ENCODE measurements at regions of chr17 and their contacts with region 1.

Region 1: DNA sequence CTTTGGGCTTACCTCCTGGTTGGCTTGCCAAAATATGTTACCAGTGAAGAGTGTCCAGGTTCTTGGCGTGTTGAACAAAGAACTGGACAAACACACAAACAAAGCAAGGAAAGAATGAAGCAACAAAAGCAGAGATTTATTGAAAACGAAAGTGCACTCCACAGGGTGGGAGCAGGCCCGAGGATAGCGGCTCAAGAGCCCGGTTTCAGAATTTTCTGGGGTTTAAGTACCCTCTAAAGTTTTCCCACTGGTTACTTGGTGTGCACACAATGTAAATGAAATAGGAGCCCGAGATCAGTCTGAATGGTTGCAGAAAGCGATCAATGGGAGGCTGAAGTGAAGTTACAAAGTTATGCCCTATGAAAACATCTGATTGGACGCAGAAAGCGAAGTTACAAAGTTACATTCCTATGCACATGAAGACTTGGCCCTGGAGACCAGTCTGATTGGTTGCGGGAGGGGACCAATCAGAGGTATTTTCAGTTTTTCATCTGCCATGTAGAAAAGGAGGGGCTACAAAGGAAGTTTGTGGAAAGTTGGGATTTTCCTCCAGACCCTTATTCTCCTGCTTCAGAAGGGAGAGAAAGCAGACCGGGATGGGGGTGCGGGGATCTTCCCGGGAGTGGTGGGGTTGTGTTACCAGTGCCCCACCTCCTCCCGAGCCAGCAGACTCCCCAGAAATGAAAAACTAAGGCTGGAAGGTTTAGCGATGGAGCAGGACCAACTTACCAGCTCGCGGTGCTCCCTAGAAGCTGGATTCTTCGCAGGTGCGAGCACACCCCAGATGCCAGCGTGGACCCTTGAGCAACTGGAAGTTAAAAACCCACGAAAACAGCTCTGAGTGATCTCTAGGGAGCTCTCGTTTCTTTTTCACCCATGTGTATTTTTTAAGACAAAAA is at the start of gene SLFN12:
- DNase-seq: peak; percentile 98
- ATAC-seq: peak; percentile 78
- H3K4me3 ChIP-seq: peak within 1 kb of the TSS; percentile 59
- H3K27ac ChIP-seq: peak within 1 kb of the TSS; percentile 92
- H3K4me1 ChIP-seq: peaks cover 1% of the 10 kb centered on the region; the same call in 1 of the 2 replicates
- H3K27me3 ChIP-seq: no peaks in the 10 kb centered on the region
- CTCF ChIP-seq: no peak
- POLR2A ChIP-seq: peak; percentile 83; the same call in 1 of the 2 replicates
- RAD21 ChIP-seq: no peak
- total RNA-seq, gene SLFN12: 38.9 and 48.6 TPM in 2 replicates

Region 2: GRCh38 chr17:35242805-35243560 is 189.4 kb before region 1 on chr17 and contains the start of gene SLFN5:
- CTCF ChIA-PET with region 1: no interaction called
- POLR2A ChIA-PET with region 1: no interaction called
- dilution Hi-C with region 1: no loop called
- in situ Hi-C with region 1: no loop called
- intact Hi-C with region 1: loop called (anchors 1 kb)
- DNase-seq: peak; percentile 90
- ATAC-seq: peak; percentile 79
- H3K4me3 ChIP-seq: peak within 1 kb of the TSS; percentile 59
- H3K27ac ChIP-seq: peak within 1 kb of the TSS; percentile 85
- H3K4me1 ChIP-seq: peaks cover 5% of the 10 kb centered on the region
- H3K27me3 ChIP-seq: no peaks in the 10 kb centered on the region
- CTCF ChIP-seq: no peak
- POLR2A ChIP-seq: peak; percentile 99
- RAD21 ChIP-seq: 0 out of 2 replicates have a peak, but pooled peaks have one; percentile 5
- total RNA-seq, gene SLFN5: 48.9 and 64.2 TPM in 2 replicates

Region 3: DNA sequence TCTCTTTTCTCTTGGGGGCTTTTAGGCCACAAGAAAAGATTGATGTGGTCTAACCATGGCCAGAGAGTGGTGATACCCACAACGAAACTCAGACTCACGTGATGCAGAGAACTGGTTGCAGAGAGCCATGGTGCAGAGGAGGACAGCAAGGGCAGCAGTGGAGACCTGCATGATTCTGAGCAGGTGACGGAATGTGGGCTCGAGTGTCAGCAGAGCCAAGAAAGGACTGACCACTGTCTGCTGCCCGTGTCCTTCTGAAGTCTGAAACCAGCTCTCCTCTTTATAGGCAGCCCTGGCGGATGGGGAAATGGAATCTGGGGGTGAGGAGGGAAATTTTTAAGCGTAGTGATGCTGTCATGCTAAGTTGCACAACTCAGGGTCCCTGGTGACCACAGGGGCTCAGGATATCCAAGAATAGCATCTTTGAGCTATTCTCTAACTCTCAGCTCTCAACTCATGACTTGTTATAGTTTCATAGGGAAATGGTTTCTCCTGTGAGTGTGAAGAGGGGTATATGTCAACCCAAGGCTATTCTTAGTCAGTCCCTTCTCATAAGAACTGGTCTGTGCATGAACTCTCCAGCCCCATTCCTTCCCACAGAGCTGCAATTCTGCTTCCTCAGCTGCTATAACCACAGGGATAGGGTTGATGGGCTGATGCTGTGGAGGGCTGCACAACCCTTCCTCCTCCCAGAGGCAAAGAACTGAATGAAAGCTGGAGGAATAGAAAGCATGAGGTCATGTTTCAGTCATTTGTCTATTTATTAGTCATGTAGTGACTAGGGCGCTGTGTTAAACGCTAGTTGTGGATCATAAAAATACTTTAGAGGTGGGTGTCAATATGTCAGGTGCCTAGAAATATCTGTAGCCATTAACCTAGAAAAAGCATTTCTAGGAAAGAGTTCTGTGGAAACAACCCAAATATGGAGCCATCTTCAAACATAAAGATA is 657.7 kb after region 1 on chr17 and contains the start of gene CCL3:
- CTCF ChIA-PET with region 1: no interaction called
- POLR2A ChIA-PET with region 1: no interaction called
- dilution Hi-C with region 1: no loop called
- in situ Hi-C with region 1: no loop called
- intact Hi-C with region 1: no loop called
- DNase-seq: no peak
- ATAC-seq: no peak
- H3K4me3 ChIP-seq: no peak within 1 kb of the TSS
- H3K27ac ChIP-seq: no peak within 1 kb of the TSS
- H3K4me1 ChIP-seq: no peaks in the 10 kb centered on the region
- H3K27me3 ChIP-seq: no peaks in the 10 kb centered on the region; the same call in 1 of the 2 replicates
- CTCF ChIP-seq: no peak
- POLR2A ChIP-seq: no peak
- RAD21 ChIP-seq: no peak
- total RNA-seq, gene CCL3: not detected in 2 replicates

Measured in IMR-90 (cell line).